Activated CD4-positive, alpha-beta memory T cell treated with anti-CD3 and anti-CD28 coated beads for 36 hours (primary cell): ENCODE measurements at regions of chr3 and their contacts with region 1.

Region 1: DNA sequence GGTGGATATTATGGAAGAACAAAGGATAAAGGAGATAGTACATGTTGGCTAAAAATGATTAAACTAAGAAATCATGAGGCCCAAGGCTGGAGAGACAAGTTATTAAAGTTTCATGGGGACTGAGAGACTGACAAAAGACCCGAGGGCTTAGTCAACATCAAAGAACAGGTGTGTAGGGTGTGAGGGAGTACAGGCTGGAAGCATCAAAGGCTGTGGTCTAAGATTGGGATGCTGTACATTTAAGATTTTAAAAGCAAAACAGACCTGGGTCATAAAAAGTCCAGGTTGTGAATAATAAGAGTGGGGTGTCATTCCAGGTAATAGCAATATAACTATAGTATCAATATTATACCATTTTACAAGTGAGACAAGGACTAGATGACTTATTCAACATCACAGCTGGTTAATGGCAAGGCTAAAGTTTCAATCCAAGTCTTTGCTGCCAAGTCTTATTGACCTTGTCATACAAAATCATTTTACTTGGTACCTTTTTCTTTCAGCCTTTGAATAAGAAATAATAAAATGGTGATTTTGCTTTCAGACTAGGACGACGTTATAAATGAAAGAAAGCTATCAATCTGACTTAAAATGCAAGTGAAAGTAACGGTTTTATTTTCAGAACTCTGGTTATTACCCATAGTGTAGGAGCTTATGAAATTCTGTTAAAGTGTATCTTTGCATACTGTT is 211.6 kb downstream of the TNIK start:
- DNase-seq: no peak
- H3K4me3 Mint-ChIP-seq: no peak overlapping the region
- H3K27ac Mint-ChIP-seq: no peak overlapping the region
- H3K4me1 Mint-ChIP-seq: peaks cover 47% of the 10 kb centered on the region
- H3K27me3 Mint-ChIP-seq: no peaks in the 10 kb centered on the region

Region 2: DNA sequence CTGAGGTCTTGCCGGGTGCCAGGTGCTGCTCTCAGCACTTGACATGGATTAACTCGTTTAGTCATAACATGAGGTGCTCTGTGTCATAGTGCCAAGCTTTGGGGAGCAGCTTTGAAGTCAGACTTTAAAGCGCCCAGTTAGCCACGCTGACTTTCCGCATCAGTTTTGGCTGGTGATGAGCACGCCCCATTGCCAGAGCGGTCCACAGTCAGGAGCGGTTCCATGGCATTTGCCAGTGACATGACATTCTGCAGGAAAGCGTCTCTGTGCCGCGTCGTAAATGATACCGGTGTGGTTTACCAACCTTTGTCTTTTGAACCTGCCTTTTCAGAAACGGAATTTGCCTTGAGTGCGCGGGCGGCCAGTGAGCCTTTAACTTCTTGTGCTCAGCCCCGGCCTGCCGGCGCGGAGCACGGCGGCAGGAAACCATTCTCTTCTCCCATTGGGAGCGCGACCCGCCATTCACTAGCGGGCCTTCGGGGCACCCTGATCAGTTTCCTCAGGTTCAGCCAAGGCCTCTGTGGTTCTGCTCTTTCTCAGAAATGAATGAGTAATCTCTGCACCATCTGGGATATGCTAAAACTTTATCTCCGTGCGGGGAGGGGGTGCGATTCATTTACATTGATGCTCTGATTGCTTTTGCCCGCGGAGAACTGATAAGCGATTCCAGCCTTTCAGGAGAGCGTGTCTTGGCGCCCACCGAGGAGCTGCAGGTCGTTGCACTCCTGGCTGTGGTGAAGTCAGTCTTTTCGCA is 220.4 kb before region 1 on chr3:
- CTCF ChIA-PET with region 1: no interaction called
- POLR2A ChIA-PET with region 1: no interaction called
- intact Hi-C with region 1: loop called (anchors 5 kb)
- DNase-seq: peak; percentile 80
- H3K4me3 Mint-ChIP-seq: no peak overlapping the region
- H3K27ac Mint-ChIP-seq: no peak overlapping the region
- H3K4me1 Mint-ChIP-seq: no peaks in the 10 kb centered on the region
- H3K27me3 Mint-ChIP-seq: peaks cover 14% of the 10 kb centered on the region

Region 3: GRCh38 chr3:171162986-171163723 is 85.4 kb before region 1 on chr3:
- CTCF ChIA-PET with region 1: interaction called, 5 read pairs
- POLR2A ChIA-PET with region 1: interaction called, 3 read pairs
- intact Hi-C with region 1: loop called (anchors 1 kb)
- DNase-seq: no peak
- H3K4me3 Mint-ChIP-seq: no peak overlapping the region
- H3K27ac Mint-ChIP-seq: no peak overlapping the region
- H3K4me1 Mint-ChIP-seq: peaks cover 24% of the 10 kb centered on the region
- H3K27me3 Mint-ChIP-seq: no peaks in the 10 kb centered on the region

Region 4: GRCh38 chr3:171187706-171188290 is 60.8 kb before region 1 on chr3:
- CTCF ChIA-PET with region 1: interaction called, 4 read pairs
- POLR2A ChIA-PET with region 1: interaction called, 3 read pairs
- intact Hi-C with region 1: loop called (anchors 2 kb)
- DNase-seq: no peak
- H3K4me3 Mint-ChIP-seq: no peak overlapping the region
- H3K27ac Mint-ChIP-seq: no peak overlapping the region
- H3K4me1 Mint-ChIP-seq: peaks cover 53% of the 10 kb centered on the region
- H3K27me3 Mint-ChIP-seq: no peaks in the 10 kb centered on the region

Region 5: DNA sequence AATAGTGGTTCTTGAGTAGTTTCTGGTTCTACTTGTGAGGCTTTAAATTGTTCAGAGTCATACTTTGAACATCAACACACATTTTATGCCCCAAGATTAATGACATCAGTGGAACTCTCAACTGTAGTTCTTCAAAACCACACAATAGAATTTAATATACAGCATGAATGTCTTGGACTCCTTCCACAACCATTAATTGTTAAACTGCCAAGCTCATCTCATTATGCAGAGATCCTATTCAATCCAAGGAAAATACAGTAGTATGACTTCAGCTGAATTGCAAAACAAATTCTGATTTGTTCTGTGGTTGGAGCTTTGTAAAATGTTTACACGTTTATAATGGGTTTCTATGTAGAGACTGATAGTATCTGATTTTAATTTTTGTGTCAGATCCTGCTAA is 22.9 kb before region 1 on chr3:
- CTCF ChIA-PET with region 1: no interaction called
- POLR2A ChIA-PET with region 1: no interaction called
- intact Hi-C with region 1: loop called (anchors 1 kb)
- DNase-seq: no peak
- H3K4me3 Mint-ChIP-seq: no peak overlapping the region
- H3K27ac Mint-ChIP-seq: peak overlapping the region; percentile 56
- H3K4me1 Mint-ChIP-seq: peaks cover 41% of the 10 kb centered on the region
- H3K27me3 Mint-ChIP-seq: no peaks in the 10 kb centered on the region

Region 6: DNA sequence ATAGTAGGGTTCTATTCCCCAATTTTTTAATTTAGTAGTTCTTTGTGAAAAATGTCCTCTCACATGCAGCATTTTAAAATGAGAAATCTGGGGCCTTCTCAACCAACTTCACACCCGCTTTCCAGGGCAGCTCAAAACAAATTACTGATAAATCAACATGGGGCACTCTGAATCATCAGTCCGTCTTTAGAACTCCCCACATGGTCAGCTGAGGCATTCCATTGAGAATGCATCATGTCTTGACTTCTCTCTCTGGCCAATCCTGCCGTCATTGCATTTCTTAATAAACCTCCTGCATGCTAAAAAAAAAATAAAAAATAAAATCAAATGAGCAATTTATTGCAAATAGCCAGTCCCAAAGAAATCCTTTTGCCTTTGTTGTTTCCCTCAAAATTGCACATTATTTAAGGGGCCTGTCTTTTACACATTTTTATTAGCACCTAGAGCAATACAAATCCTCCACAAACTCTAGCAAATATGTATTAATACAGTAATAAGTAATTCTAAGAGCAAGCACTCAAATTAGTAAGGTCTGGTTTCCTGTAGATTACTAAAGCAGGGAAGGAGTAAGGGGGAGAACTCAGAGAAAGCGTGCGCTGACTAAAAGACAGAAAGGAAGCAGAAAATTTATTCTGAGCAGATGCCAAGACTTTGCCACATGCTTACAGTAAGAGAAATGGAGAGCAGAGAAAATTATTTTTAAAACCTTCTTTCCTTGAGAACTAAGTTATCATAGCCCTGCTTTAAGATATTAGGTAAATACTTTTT is 35.9 kb after region 1 on chr3:
- CTCF ChIA-PET with region 1: no interaction called
- POLR2A ChIA-PET with region 1: interaction called, 4 read pairs
- intact Hi-C with region 1: loop called (anchors 1 kb)
- DNase-seq: peak; percentile 31
- H3K4me3 Mint-ChIP-seq: peak overlapping the region; percentile 24
- H3K27ac Mint-ChIP-seq: peak overlapping the region; percentile 34
- H3K4me1 Mint-ChIP-seq: peaks cover 57% of the 10 kb centered on the region
- H3K27me3 Mint-ChIP-seq: no peaks in the 10 kb centered on the region

Region 7: DNA sequence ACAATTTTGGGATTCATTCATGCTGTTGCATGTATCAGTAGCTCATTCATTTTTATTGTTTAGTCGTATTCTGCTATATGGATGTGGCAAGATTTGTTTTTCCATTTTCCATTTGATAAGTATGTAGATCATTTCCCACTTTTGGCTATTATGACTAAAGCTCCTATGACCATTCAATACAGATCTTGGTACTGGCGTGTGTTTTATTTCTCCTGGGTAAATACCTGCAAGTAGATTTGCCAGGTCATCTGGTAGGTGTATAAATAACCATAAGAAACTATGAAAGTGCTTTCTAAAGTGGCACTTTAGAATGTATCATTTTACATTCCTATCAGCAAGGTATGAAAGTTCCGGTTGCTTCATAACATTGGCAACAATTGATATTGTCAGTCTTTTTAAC is 87.0 kb after region 1 on chr3:
- CTCF ChIA-PET with region 1: no interaction called
- POLR2A ChIA-PET with region 1: no interaction called
- intact Hi-C with region 1: no loop called
- DNase-seq: no peak
- H3K4me3 Mint-ChIP-seq: no peak overlapping the region
- H3K27ac Mint-ChIP-seq: no peak overlapping the region
- H3K4me1 Mint-ChIP-seq: peaks cover 40% of the 10 kb centered on the region
- H3K27me3 Mint-ChIP-seq: no peaks in the 10 kb centered on the region

Region 8: GRCh38 chr3:171561596-171562323 is 313.2 kb after region 1 on chr3:
- CTCF ChIA-PET with region 1: interaction called, 3 read pairs
- POLR2A ChIA-PET with region 1: no interaction called
- intact Hi-C with region 1: loop called (anchors 2 kb)
- DNase-seq: no peak
- H3K4me3 Mint-ChIP-seq: peak overlapping the region; percentile 36
- H3K27ac Mint-ChIP-seq: peak overlapping the region; percentile 93
- H3K4me1 Mint-ChIP-seq: peaks cover 26% of the 10 kb centered on the region
- H3K27me3 Mint-ChIP-seq: no peaks in the 10 kb centered on the region